Activated naive CD4-positive, alpha-beta T cell treated with anti-CD3 and anti-CD28 coated beads for 36 hours (primary cell): ENCODE measurements at regions of chr12 and their contacts with region 1.

Region 1: GRCh38 chr12:91811481-91812287 is 334.0 kb downstream of the BTG1 start:
- DNase-seq: peak; percentile 86
- H3K4me3 Mint-ChIP-seq: peak overlapping the region; percentile 23
- H3K27ac Mint-ChIP-seq: peak overlapping the region; percentile 76
- H3K4me1 Mint-ChIP-seq: peaks cover 21% of the 10 kb centered on the region
- H3K27me3 Mint-ChIP-seq: no peaks in the 10 kb centered on the region

Region 2: DNA sequence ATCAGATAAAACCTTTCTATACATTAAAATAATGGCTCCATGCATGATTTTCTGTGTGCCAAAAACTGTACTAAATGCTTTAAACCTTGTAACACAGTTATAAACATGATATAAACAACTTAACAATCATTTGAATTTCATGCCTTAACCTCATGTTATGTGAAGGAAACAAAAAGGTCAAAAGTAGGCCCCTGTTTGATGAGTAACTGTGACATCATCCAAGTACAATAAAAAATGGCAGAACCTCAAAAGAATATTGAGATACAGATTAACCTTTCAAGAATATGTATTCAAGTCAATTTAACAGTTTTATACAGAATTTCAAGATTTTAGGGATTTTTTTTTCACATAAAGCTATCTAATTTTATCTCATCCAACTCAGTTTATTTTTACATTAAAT is 318.4 kb before region 1 on chr12:
- CTCF ChIA-PET with region 1: no interaction called
- intact Hi-C with region 1: no loop called
- DNase-seq: no peak
- H3K4me3 Mint-ChIP-seq: no peak overlapping the region
- H3K27ac Mint-ChIP-seq: no peak overlapping the region
- H3K4me1 Mint-ChIP-seq: peaks cover 5% of the 10 kb centered on the region
- H3K27me3 Mint-ChIP-seq: no peaks in the 10 kb centered on the region

Region 3: DNA sequence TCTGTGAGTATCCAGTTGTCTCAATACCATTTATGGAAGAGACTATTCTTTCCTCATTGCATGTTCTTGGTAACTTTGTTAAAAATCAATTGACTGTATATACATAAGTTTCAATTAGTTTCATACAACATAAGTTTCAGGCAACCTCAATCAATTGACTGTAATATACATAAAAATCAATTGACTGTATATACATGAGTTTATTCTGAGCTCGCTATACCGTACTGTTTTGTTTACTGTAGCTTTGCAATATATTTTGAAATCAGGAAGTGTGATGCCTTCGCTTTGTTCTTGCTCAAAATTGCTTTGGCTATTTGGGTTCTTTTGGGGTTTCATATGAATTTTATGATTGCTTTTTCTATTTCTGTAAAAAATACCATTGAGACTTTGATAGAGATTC is 58.0 kb before region 1 on chr12:
- CTCF ChIA-PET with region 1: no interaction called
- intact Hi-C with region 1: no loop called
- DNase-seq: no peak
- H3K4me3 Mint-ChIP-seq: no peak overlapping the region
- H3K27ac Mint-ChIP-seq: no peak overlapping the region
- H3K4me1 Mint-ChIP-seq: peaks cover 3% of the 10 kb centered on the region
- H3K27me3 Mint-ChIP-seq: no peaks in the 10 kb centered on the region

Region 4: GRCh38 chr12:91801048-91801447 is 10.6 kb before region 1 on chr12:
- CTCF ChIA-PET with region 1: interaction called, 14 read pairs
- intact Hi-C with region 1: no loop called
- DNase-seq: no peak
- H3K4me3 Mint-ChIP-seq: no peak overlapping the region
- H3K27ac Mint-ChIP-seq: no peak overlapping the region
- H3K4me1 Mint-ChIP-seq: peaks cover 2% of the 10 kb centered on the region
- H3K27me3 Mint-ChIP-seq: no peaks in the 10 kb centered on the region

Region 5: DNA sequence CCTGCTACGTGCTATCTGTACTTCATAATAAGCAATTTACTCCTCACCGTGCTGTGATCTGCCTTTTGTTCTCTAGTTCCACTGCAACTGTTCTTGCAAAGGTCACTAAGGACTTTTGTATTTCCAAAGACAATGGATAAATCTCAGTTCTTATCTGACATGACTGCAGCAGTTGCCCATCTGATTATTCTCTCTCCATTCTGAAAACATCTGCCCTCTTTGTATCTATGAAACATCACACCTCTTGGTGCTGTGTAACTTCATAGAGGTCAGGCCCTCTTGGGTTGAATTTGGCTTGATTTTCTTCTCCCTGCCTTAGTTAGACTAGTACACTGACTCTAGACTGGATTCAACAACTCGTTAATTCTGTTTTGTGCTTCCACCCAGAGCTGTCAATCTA is 14.3 kb after region 1 on chr12:
- CTCF ChIA-PET with region 1: interaction called, 15 read pairs
- intact Hi-C with region 1: no loop called
- DNase-seq: no peak
- H3K4me3 Mint-ChIP-seq: no peak overlapping the region
- H3K27ac Mint-ChIP-seq: no peak overlapping the region
- H3K4me1 Mint-ChIP-seq: no peaks in the 10 kb centered on the region
- H3K27me3 Mint-ChIP-seq: no peaks in the 10 kb centered on the region

Region 6: GRCh38 chr12:91833780-91834359 is 22.2 kb after region 1 on chr12:
- CTCF ChIA-PET with region 1: interaction called, 13 read pairs
- intact Hi-C with region 1: no loop called
- DNase-seq: no peak
- H3K4me3 Mint-ChIP-seq: no peak overlapping the region
- H3K27ac Mint-ChIP-seq: no peak overlapping the region
- H3K4me1 Mint-ChIP-seq: peaks cover 17% of the 10 kb centered on the region
- H3K27me3 Mint-ChIP-seq: no peaks in the 10 kb centered on the region

Region 7: DNA sequence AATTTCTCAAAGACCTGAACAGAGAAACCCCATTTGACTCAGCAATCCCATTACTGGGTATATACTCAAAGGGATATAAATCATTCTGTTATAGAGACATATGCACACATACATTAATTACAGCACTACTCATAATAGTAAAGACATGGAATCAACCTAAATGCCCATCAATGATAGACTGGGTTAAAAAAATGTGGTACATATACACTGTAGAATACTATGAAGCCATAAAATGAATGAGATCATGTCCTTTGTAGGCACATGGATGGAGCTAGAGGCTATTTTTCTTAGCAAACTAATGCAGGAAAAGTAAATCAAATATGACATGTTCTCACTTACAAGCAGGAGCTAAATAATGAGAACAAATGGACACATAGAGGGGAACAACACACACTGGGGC is 30.1 kb after region 1 on chr12:
- CTCF ChIA-PET with region 1: interaction called, 11 read pairs
- intact Hi-C with region 1: no loop called
- DNase-seq: no peak
- H3K4me3 Mint-ChIP-seq: no peak overlapping the region
- H3K27ac Mint-ChIP-seq: no peak overlapping the region
- H3K4me1 Mint-ChIP-seq: peaks cover 14% of the 10 kb centered on the region
- H3K27me3 Mint-ChIP-seq: no peaks in the 10 kb centered on the region

Region 8: GRCh38 chr12:91985002-91985787 is 173.5 kb after region 1 on chr12:
- CTCF ChIA-PET with region 1: interaction called, 9 read pairs
- intact Hi-C with region 1: loop called (anchors 5 kb)
- DNase-seq: no peak
- H3K4me3 Mint-ChIP-seq: no peak overlapping the region
- H3K27ac Mint-ChIP-seq: no peak overlapping the region
- H3K4me1 Mint-ChIP-seq: peaks cover 48% of the 10 kb centered on the region
- H3K27me3 Mint-ChIP-seq: no peaks in the 10 kb centered on the region